Calu3 (cell line): ENCODE measurements at regions of chr3 and their contacts with region 1.

Region 1: GRCh38 chr3:152471814-152472671 is 203.3 kb downstream of the MBNL1 start:
- DNase-seq: peak; percentile 76
- H3K4me3 Mint-ChIP-seq: peak overlapping the region; percentile 53
- H3K27ac Mint-ChIP-seq: peak overlapping the region; percentile 77
- H3K4me1 Mint-ChIP-seq: peaks cover 1% of the 10 kb centered on the region
- H3K27me3 Mint-ChIP-seq: no peaks in the 10 kb centered on the region
- CTCF ChIP-seq: peak; percentile 87

Region 2: GRCh38 chr3:151356794-151357462 is 1115.1 kb before region 1 on chr3:
- CTCF ChIA-PET with region 1: interaction called, 10 read pairs
- intact Hi-C with region 1: no loop called
- DNase-seq: peak; percentile 9
- H3K4me3 Mint-ChIP-seq: no peak overlapping the region
- H3K27ac Mint-ChIP-seq: no peak overlapping the region
- H3K4me1 Mint-ChIP-seq: peaks cover 20% of the 10 kb centered on the region
- H3K27me3 Mint-ChIP-seq: no peaks in the 10 kb centered on the region
- CTCF ChIP-seq: no peak

Region 3: DNA sequence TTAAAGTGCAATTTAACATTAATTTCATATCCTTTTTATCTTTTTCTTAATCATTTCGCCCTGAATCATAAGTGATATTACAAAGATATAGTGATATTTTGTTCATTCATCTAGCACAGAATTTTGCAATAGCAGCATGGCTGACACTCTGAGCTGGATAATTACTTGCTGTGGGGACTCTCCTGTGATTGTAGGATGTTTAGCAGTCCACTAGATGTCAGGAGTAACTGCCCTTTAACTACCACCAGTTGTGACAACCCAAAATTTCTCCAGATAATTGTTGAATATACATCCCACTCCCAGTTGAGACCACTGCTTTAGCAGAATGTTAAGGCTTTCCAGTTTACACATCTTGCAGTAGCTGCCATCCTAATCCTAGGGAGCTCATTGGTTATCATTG is 400.1 kb before region 1 on chr3:
- CTCF ChIA-PET with region 1: interaction called, 9 read pairs
- intact Hi-C with region 1: loop called (anchors 2 kb)
- DNase-seq: peak; percentile 11
- H3K4me3 Mint-ChIP-seq: no peak overlapping the region
- H3K27ac Mint-ChIP-seq: no peak overlapping the region
- H3K4me1 Mint-ChIP-seq: no peaks in the 10 kb centered on the region
- H3K27me3 Mint-ChIP-seq: no peaks in the 10 kb centered on the region
- CTCF ChIP-seq: peak; percentile 29

Region 4: DNA sequence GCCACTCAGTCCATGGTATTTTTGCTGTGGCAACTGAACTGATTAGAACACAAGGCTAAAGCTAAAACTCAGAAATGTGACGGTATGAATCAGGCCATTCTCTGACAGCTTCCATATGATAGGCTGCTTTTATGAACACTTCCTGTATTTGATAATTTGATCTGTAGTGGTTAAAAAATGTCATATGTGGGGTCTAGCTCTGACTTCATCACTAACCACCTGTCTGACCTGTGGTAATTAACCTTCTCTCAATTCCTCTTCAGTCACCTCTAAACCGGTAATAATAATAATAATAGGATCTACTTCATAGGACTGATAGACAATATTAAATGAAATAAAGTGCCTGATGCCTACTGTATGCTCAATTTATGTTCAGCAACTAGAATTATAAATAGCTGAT is 19.9 kb after region 1 on chr3:
- CTCF ChIA-PET with region 1: no interaction called
- intact Hi-C with region 1: no loop called
- DNase-seq: no peak
- H3K4me3 Mint-ChIP-seq: no peak overlapping the region
- H3K27ac Mint-ChIP-seq: no peak overlapping the region
- H3K4me1 Mint-ChIP-seq: no peaks in the 10 kb centered on the region
- H3K27me3 Mint-ChIP-seq: no peaks in the 10 kb centered on the region
- CTCF ChIP-seq: no peak

Region 5: GRCh38 chr3:152574461-152575079 is 102.5 kb after region 1 on chr3:
- CTCF ChIA-PET with region 1: interaction called, 7 read pairs
- intact Hi-C with region 1: loop called (anchors 1 kb)
- DNase-seq: peak; percentile 60
- H3K4me3 Mint-ChIP-seq: no peak overlapping the region
- H3K27ac Mint-ChIP-seq: no peak overlapping the region
- H3K4me1 Mint-ChIP-seq: no peaks in the 10 kb centered on the region
- H3K27me3 Mint-ChIP-seq: no peaks in the 10 kb centered on the region
- CTCF ChIP-seq: peak; percentile 47